IMR-90 (cell line): ENCODE measurements at regions of chr18 and their contacts with region 1.

Region 1: GRCh38 chr18:31555971-31556747 is 35.5 kb upstream of the TTR start:
- DNase-seq: peak; percentile 70
- ATAC-seq: peak; percentile 94
- H3K4me3 ChIP-seq: no peak overlapping the region
- H3K27ac ChIP-seq: no peak overlapping the region
- H3K4me1 ChIP-seq: no peaks in the 10 kb centered on the region
- H3K27me3 ChIP-seq: no peaks in the 10 kb centered on the region
- CTCF ChIP-seq: peak; percentile 81
- POLR2A ChIP-seq: no peak
- RAD21 ChIP-seq: peak; percentile 80

Region 2: GRCh38 chr18:31424383-31424988 is 131.7 kb before region 1 on chr18:
- CTCF ChIA-PET with region 1: interaction called, 3 read pairs
- POLR2A ChIA-PET with region 1: no interaction called
- dilution Hi-C with region 1: no loop called
- in situ Hi-C with region 1: no loop called
- intact Hi-C with region 1: loop called (anchors 5 kb)
- DNase-seq: peak; percentile 20
- ATAC-seq: peak; percentile 51; the same call in 1 of the 2 replicates
- H3K4me3 ChIP-seq: no peak overlapping the region
- H3K27ac ChIP-seq: no peak overlapping the region
- H3K4me1 ChIP-seq: no peaks in the 10 kb centered on the region
- H3K27me3 ChIP-seq: no peaks in the 10 kb centered on the region
- CTCF ChIP-seq: peak; percentile 43
- POLR2A ChIP-seq: no peak
- RAD21 ChIP-seq: peak; percentile 57

Region 3: DNA sequence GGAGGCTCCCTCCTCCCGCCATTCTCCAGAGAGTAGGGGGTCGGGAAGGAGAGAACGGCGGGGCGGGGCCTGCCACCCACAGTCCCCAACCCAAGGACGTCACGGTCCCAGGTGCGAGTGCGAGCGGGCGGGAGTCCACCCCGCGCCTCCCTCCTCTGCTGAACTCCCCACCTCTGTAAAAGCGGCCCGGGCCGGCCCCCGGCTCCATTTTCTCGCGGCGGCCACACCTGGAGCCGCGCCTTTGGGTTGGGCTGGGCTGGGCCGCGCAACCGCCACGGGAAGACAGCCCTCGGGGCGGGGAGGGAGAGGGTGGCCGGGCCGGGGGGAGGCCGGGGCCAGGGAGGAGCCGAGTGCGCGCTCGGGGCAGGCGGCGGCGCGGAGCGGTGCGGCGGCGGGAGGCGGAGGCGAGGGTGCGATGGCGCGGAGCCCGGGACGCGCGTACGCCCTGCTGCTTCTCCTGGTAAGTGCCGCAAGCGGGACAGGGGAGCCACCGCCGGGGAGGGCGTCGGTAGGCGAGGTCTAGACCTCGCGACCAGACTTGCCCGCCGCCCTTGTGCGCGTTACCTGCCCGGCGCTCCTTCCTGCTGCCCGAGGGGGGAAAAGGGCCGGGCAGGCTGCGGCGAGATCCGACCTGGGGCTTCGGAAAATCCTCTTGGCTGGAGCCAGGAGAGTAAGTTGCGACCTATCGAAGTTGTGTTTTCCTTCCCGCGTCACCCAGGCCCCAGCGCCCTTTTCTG is 58.2 kb before region 1 on chr18 and contains the start of gene DSG2:
- CTCF ChIA-PET with region 1: no interaction called
- POLR2A ChIA-PET with region 1: no interaction called
- dilution Hi-C with region 1: no loop called
- in situ Hi-C with region 1: no loop called
- intact Hi-C with region 1: no loop called
- DNase-seq: no peak
- ATAC-seq: peak; percentile 92
- H3K4me3 ChIP-seq: peak within 1 kb of the TSS; percentile 47
- H3K27ac ChIP-seq: no peak within 1 kb of the TSS
- H3K4me1 ChIP-seq: no peaks in the 10 kb centered on the region
- H3K27me3 ChIP-seq: peaks cover 9% of the 10 kb centered on the region
- CTCF ChIP-seq: no peak
- POLR2A ChIP-seq: no peak
- RAD21 ChIP-seq: no peak
- total RNA-seq, gene DSG2: 1.7 and 2.3 TPM in 2 replicates

Region 4: DNA sequence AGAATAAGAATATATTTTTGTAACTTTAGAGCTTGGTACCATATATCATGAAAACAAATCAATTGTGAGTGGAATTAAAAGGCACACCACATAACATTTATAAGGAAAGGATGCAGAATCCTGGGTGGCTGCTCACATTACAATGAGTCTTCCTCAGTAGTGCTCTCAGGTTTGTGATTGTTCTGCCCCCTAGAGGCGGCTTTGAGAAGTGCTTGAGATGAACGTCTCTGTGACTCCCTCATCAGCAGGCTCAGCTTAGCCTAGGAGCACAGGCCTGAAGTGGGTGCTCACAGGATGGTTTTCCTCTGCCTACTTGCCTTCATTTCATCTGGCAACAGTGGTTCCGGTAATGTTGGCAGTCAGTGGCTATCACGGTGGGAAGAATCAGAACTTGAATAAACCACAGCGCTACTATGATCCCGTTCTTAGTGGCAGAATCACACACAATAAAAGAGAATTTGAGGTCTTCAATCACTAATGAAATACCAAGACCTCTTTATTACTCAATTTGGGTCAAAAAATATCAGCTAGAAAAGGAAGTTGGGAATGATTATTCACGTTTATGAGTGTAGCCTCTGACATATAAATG is 166.3 kb after region 1 on chr18:
- CTCF ChIA-PET with region 1: interaction called, 4 read pairs
- POLR2A ChIA-PET with region 1: no interaction called
- dilution Hi-C with region 1: no loop called
- in situ Hi-C with region 1: loop called (anchors 10 kb)
- intact Hi-C with region 1: loop called (anchors 1 kb)
- DNase-seq: peak; percentile 63
- ATAC-seq: peak; percentile 98
- H3K4me3 ChIP-seq: no peak overlapping the region
- H3K27ac ChIP-seq: no peak overlapping the region
- H3K4me1 ChIP-seq: no peaks in the 10 kb centered on the region
- H3K27me3 ChIP-seq: peaks cover 14% of the 10 kb centered on the region
- CTCF ChIP-seq: peak; percentile 63
- POLR2A ChIP-seq: no peak
- RAD21 ChIP-seq: peak; percentile 56

Region 5: GRCh38 chr18:31819106-31819924 is 263.2 kb after region 1 on chr18:
- CTCF ChIA-PET with region 1: no interaction called
- POLR2A ChIA-PET with region 1: no interaction called
- dilution Hi-C with region 1: no loop called
- in situ Hi-C with region 1: loop called (anchors 25 kb)
- intact Hi-C with region 1: loop called (anchors 1 kb)
- DNase-seq: peak; percentile 52
- ATAC-seq: peak; percentile 92
- H3K4me3 ChIP-seq: no peak overlapping the region
- H3K27ac ChIP-seq: no peak overlapping the region
- H3K4me1 ChIP-seq: no peaks in the 10 kb centered on the region
- H3K27me3 ChIP-seq: no peaks in the 10 kb centered on the region
- CTCF ChIP-seq: peak; percentile 73
- POLR2A ChIP-seq: no peak
- RAD21 ChIP-seq: peak; percentile 56

Region 6: DNA sequence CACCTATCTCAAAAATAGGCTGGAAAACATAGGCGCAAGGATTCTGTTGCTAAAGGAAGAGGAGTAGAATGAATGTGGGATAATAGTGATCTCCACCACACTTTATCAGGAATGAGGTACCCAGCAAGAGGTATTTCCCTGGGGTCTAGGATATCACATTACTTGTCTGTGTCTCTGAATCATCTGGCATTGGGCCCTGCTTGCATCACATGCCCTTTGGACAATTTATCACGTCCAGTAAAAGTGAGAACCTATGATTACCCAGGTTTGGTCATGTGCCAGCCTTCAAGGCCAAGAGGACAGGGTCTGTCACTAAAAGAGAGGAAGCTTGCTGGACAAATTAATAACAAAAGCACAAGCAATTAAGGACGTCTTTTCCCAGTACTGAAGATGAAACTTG is 398.2 kb after region 1 on chr18:
- CTCF ChIA-PET with region 1: no interaction called
- POLR2A ChIA-PET with region 1: no interaction called
- dilution Hi-C with region 1: no loop called
- in situ Hi-C with region 1: loop called (anchors 25 kb)
- intact Hi-C with region 1: loop called (anchors 5 kb)
- DNase-seq: peak; percentile 10
- ATAC-seq: no peak
- H3K4me3 ChIP-seq: no peak overlapping the region
- H3K27ac ChIP-seq: no peak overlapping the region
- H3K4me1 ChIP-seq: no peaks in the 10 kb centered on the region
- H3K27me3 ChIP-seq: no peaks in the 10 kb centered on the region
- CTCF ChIP-seq: no peak
- POLR2A ChIP-seq: no peak
- RAD21 ChIP-seq: no peak

Region 7: GRCh38 chr18:31977270-31977872 is 421.2 kb after region 1 on chr18:
- CTCF ChIA-PET with region 1: no interaction called
- POLR2A ChIA-PET with region 1: no interaction called
- dilution Hi-C with region 1: no loop called
- in situ Hi-C with region 1: loop called (anchors 25 kb)
- intact Hi-C with region 1: loop called (anchors 1 kb)
- DNase-seq: peak; percentile 54
- ATAC-seq: peak; percentile 72; the same call in 1 of the 2 replicates
- H3K4me3 ChIP-seq: no peak overlapping the region
- H3K27ac ChIP-seq: no peak overlapping the region
- H3K4me1 ChIP-seq: no peaks in the 10 kb centered on the region
- H3K27me3 ChIP-seq: no peaks in the 10 kb centered on the region
- CTCF ChIP-seq: peak; percentile 74
- POLR2A ChIP-seq: no peak
- RAD21 ChIP-seq: peak; percentile 80